ENCODE measurements at regions of chr11 and their contacts with region 1.

Region 1: GRCh38 chr11:116459185-116460045 is 313.4 kb downstream of the BUD13 start:
- DNase-seq: peak; percentile 91
- H3K4me3 ChIP-seq: no peak overlapping the region
- H3K27ac ChIP-seq: peak overlapping the region in 3 of 4 donors; percentile 69 to 77 (median 77)
- H3K4me1 ChIP-seq: peaks cover 2 to 74% (median 54%) of the 10 kb centered on the region in 4 donors
- H3K27me3 ChIP-seq: no peaks in the 10 kb centered on the region
- CTCF ChIP-seq: peak in 1 of 4 experiments; percentile 28
- EP300 ChIP-seq: peak in 2 of 4 donors; percentile 48 to 53
- POLR2A ChIP-seq: no peak

Region 2: DNA sequence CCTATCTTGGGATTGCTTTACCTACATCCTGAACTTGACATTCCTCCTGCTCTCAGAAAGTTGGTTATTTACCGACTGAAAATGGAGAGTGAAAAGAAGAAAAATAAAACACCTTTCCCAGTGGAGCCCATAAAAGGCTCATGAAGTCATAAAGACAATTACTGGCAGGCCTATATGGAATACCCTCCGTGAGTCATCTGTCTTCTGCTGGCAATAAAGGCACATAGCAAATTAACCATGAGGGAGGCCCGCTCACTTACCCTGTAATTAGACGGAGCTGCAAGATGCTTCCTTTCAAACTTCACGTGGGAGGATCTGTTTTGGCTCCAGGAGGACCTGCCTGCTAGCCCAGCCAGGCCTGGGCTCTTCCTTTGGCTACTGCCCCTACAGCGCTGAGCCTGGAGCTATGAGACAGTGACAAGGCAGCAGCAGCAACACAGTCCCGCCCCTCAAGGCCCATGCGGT is 227.0 kb before region 1 on chr11:
- intact Hi-C with region 1: loop called (anchors 5 kb)
- DNase-seq: peak; percentile 69
- H3K4me3 ChIP-seq: no peak overlapping the region
- H3K27ac ChIP-seq: peak overlapping the region in 3 of 4 donors; percentile 1 to 43 (median 32)
- H3K4me1 ChIP-seq: peaks cover 0 to 29% (median 11%) of the 10 kb centered on the region in 4 donors
- H3K27me3 ChIP-seq: peaks cover 0 to 3% (median 0%) of the 10 kb centered on the region in 3 donors
- CTCF ChIP-seq: no peak
- EP300 ChIP-seq: no peak
- POLR2A ChIP-seq: no peak

Region 3: GRCh38 chr11:116379185-116379828 is 80.1 kb before region 1 on chr11:
- intact Hi-C with region 1: no loop called
- DNase-seq: no peak
- H3K4me3 ChIP-seq: no peak overlapping the region
- H3K27ac ChIP-seq: no peak overlapping the region
- H3K4me1 ChIP-seq: no peaks in the 10 kb centered on the region
- H3K27me3 ChIP-seq: no peaks in the 10 kb centered on the region
- CTCF ChIP-seq: no peak
- EP300 ChIP-seq: no peak
- POLR2A ChIP-seq: no peak

Region 4: DNA sequence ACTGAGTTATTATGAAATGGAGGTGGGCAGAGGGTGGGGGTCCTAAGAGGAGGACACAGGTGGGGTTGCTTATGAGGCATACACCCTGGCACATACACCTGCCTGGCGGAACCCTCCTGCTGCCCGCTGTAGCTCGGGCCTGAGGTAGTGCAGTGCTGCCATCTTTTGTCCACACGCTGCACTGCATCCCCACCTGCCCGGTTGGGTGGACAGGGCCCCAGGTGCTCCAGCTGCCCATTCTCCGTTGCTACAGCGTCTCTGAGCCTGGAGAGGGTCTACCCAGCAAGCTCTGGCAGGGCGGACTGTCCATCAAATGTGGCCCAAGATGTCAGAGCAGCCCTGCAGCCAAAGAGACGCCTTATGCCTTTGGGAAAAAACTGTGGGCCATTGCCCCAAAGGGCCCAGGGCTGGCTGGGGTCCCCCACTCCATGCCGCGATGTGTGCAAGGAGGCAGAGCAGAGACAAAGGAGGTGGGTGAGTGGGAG is 182.2 kb after region 1 on chr11:
- intact Hi-C with region 1: loop called (anchors 5 kb)
- DNase-seq: no peak
- H3K4me3 ChIP-seq: no peak overlapping the region
- H3K27ac ChIP-seq: no peak overlapping the region
- H3K4me1 ChIP-seq: no peaks in the 10 kb centered on the region
- H3K27me3 ChIP-seq: no peaks in the 10 kb centered on the region
- CTCF ChIP-seq: peak; percentile 26 to 64 (median 52)
- EP300 ChIP-seq: no peak
- POLR2A ChIP-seq: no peak

Measured in sigmoid colon (tissue), 7 donors.